Activated CD4-positive, alpha-beta T cell treated with anti-CD3 and anti-CD28 coated beads for 36 hours (primary cell): ENCODE measurements at regions of chr7 and their contacts with region 1.

Region 1: DNA sequence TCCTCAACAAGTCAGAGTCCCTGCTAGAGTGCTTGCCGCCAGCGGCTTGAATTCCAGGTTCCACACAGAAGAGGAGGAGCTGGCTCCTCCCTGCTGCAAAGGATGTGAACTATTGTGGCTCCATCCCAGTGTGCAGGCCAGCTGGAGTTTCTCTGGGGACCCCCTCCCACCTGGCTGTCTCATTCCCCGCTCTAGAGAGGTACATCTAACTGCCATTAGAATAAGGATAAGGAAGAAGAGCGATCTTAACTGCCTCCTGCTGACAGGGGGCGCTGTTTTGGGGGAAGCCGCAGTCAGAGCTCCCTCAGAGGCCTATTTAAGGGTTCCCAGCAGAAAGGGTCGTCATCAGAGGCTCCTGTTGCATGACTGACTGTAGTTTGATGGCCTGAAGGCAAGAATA is 40.8 kb upstream of the HECW1 start:
- DNase-seq: peak; percentile 63
- ATAC-seq: peak; percentile 36
- H3K4me3 Mint-ChIP-seq: no peak overlapping the region
- H3K27ac Mint-ChIP-seq: no peak overlapping the region
- H3K4me1 Mint-ChIP-seq: peaks cover 8% of the 10 kb centered on the region
- H3K27me3 Mint-ChIP-seq: peaks cover 20% of the 10 kb centered on the region

Region 2: DNA sequence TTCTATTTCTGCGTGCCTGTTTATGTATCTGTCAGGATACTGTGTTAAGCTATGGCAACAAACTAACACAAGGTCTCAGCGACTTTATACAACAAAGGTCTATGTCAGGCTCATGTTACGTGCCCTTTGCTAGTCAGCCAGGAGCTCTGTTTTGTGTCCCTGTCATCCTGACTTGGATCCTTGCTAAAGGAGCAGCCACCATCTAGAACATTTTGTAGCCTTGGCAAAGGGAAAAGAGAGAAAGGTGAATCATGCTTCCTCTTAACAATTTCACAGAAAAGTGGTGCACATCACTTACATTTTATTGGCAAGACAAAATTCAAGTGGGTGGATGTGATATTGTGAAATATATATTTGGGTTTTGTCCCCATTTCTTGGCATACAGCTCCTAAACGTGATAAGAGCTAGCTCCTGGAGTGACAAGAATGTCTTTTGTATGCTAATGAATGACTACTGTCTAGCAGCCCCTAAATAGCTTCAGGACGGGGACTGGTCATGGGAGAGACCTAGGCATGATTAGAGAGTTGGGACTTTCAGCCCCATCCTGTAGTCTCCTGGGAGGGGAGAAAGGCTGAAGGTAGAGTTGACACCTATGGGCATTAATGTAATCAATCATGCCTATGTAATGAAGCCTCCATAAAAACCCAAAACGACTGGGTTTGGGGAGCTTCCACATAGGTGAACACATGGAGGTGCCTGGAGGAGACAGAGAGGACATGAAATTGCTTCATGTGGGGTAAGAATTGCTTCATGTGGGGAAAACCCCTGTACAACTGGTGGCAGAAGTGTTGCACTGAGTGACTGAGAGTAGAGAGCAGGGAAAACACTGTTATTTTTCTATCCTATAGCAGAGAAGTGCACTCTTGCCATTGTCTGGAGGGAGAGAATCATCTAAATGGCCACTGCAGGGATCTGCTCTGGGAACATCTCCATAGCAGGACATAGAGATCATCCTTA is 106.5 kb before region 1 on chr7:
- CTCF ChIA-PET with region 1: no interaction called
- POLR2A ChIA-PET with region 1: no interaction called
- intact Hi-C with region 1: loop called in 1 of 2 experiments (anchors 5 kb)
- DNase-seq: peak; percentile 22
- ATAC-seq: peak; percentile 88
- H3K4me3 Mint-ChIP-seq: no peak overlapping the region
- H3K27ac Mint-ChIP-seq: peak overlapping the region; percentile 24
- H3K4me1 Mint-ChIP-seq: peaks cover 12% of the 10 kb centered on the region
- H3K27me3 Mint-ChIP-seq: peaks cover 9% of the 10 kb centered on the region

Region 3: DNA sequence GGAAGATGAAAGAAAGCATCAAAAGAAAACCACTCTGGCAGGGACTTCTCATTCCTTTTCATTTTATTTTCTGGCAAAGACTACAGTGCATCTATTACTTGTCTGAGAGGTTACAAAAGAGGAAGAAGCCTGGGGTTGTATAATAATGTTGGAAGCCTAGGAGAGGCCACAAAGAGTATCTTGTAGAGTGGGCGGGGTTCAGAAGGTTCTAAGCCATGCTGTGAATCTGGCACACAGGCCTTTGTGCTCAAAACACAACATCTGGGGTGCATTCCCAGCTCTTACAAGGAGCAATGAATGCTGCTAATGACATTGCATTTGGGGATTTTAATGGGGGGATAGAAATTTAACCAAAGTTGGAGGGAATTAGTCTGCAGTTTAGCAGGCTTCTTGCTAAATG is 90.0 kb before region 1 on chr7:
- CTCF ChIA-PET with region 1: no interaction called
- POLR2A ChIA-PET with region 1: no interaction called
- intact Hi-C with region 1: no loop called
- DNase-seq: no peak
- ATAC-seq: no peak
- H3K4me3 Mint-ChIP-seq: no peak overlapping the region
- H3K27ac Mint-ChIP-seq: no peak overlapping the region
- H3K4me1 Mint-ChIP-seq: no peaks in the 10 kb centered on the region
- H3K27me3 Mint-ChIP-seq: peaks cover 13% of the 10 kb centered on the region

Region 4: GRCh38 chr7:43260980-43261878 is 189.6 kb after region 1 on chr7:
- CTCF ChIA-PET with region 1: no interaction called
- POLR2A ChIA-PET with region 1: no interaction called
- intact Hi-C with region 1: loop called in 1 of 2 experiments (anchors 2 kb)
- DNase-seq: peak; percentile 81
- ATAC-seq: peak; percentile 76
- H3K4me3 Mint-ChIP-seq: no peak overlapping the region
- H3K27ac Mint-ChIP-seq: no peak overlapping the region
- H3K4me1 Mint-ChIP-seq: no peaks in the 10 kb centered on the region
- H3K27me3 Mint-ChIP-seq: peaks cover 10% of the 10 kb centered on the region